ENCODE measurements at regions of chr7 and their contacts with region 1.

Region 1: DNA sequence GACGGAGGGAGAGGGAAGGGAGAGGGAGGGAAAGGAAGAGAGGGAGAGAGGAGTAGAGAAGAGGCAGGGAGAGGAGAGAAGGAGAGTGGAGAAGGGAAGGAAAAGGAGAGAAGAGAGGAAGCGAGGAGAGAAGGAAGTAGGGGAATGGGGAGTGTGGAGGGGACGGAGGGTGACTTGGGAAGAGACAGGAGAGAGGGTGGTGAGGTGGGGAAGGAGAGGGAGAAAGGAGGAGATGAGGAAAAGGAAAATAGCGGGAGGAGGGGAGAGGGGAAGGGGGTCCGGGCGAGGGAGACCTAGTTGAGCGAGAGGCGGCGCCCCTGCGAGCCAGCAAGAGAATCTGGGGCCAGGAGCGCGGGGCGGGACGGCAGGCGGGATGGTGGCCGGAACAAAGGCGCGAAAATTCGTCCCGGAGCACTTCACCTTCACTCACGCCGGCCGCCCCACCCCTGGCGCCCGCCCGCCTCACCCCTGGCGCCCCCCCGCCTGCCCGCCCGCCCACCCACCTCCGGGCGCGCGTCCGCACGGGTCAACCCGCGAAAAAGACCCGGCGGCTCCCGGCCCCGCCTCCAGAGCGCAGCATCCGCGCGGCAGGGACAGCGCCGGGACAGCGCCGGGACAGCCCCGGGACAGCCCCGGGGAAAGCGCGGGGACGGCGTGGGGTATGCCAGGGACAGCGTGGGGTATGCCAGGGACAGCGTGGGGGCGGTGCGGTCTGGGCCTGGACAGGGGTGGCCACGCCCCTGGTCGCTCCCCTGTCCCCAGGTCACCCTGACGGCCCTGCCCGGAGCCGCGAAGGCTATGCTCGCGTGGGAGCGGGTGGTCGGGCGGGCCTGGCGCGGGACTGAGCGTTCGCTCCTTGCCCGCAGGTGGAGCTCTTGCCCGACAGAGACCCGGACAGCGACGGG is 4.2 kb downstream of the VSTM2A start:
- DNase-seq: peak in 2 of 10 donors; percentile 44 to 55
- H3K4me3 ChIP-seq: peak overlapping the region; percentile 9 to 76 (median 53)
- H3K27ac ChIP-seq: peak overlapping the region in 5 of 59 donors; percentile 9 to 48 (median 26)
- H3K27me3 ChIP-seq: peaks cover 0 to 59% (median 27%) of the 10 kb centered on the region in 45 donors
- CTCF ChIP-seq: peak in 25 of 56 donors; percentile 4 to 43 (median 21)

Region 2: DNA sequence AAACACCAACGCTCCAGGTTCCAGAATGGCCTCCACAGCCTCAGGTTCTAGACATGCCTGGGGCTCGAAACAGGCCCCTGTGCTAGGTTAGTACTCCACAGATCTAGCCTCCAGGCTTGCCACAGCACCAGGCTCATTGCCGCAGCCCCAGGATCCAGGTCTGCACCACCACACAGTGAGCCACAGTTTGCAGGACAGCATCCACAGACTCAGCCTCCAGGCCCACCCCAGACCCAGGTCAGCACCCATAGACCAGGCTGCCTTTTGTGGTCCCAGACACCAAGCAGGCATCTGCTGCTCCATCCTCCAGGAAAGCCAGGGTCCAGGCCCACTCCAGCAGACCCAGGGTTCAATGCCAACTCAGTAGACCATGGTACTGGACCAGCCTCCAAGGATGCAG is 136.4 kb before region 1 on chr7:
- intact Hi-C with region 1: no loop called
- DNase-seq: no peak
- H3K4me3 ChIP-seq: no peak overlapping the region
- H3K27ac ChIP-seq: no peak overlapping the region
- H3K27me3 ChIP-seq: no peaks in the 10 kb centered on the region
- CTCF ChIP-seq: no peak

Region 3: GRCh38 chr7:54664235-54665228 is 118.2 kb after region 1 on chr7:
- intact Hi-C with region 1: loop called in 1 of 2 experiments (anchors 10 kb)
- DNase-seq: peak; percentile 42 to 88 (median 71)
- H3K4me3 ChIP-seq: peak overlapping the region; percentile 43 to 80 (median 64)
- H3K27ac ChIP-seq: peak overlapping the region in 41 of 59 donors; percentile 7 to 88 (median 63)
- H3K27me3 ChIP-seq: peaks cover 0 to 11% (median 0%) of the 10 kb centered on the region in 45 donors
- CTCF ChIP-seq: peak; percentile 19 to 82 (median 66)

Measured in dorsolateral prefrontal cortex (tissue), 120 donors.